Colonic mucosa (tissue), 4 donors: ENCODE measurements at regions of chr9 and their contacts with region 1.

Region 1: GRCh38 chr9:15552636-15553527 is at the start of gene CCDC171:
- DNase-seq: peak; percentile 95
- H3K4me3 ChIP-seq: peak within 1 kb of the TSS; percentile 73
- H3K27ac ChIP-seq: peak within 1 kb of the TSS; percentile 76
- H3K4me1 ChIP-seq: no peaks in the 10 kb centered on the region
- H3K27me3 ChIP-seq: no peaks in the 10 kb centered on the region
- CTCF ChIP-seq: no peak
- total RNA-seq, gene CCDC171: 2.3 TPM

Region 2: GRCh38 chr9:15510789-15511575 is 41.9 kb before region 1 on chr9 and contains the start of gene PSIP1:
- intact Hi-C with region 1: loop called (anchors 5 kb)
- DNase-seq: peak; percentile 85
- H3K4me3 ChIP-seq: peak within 1 kb of the TSS; percentile 98
- H3K27ac ChIP-seq: peak within 1 kb of the TSS; percentile 93
- H3K4me1 ChIP-seq: no peaks in the 10 kb centered on the region
- H3K27me3 ChIP-seq: no peaks in the 10 kb centered on the region
- CTCF ChIP-seq: no peak
- total RNA-seq, gene PSIP1: 25.5 to 41.2 TPM